Dorsolateral prefrontal cortex (tissue), 120 donors: ENCODE measurements at regions of chr1 and their contacts with region 1.

Region 1: GRCh38 chr1:33080885-33081553 is at the start of gene AZIN2:
- DNase-seq: peak; percentile 99 to 100 (median 99)
- H3K4me3 ChIP-seq: peak within 1 kb of the TSS; percentile 62 to 99 (median 91)
- H3K27ac ChIP-seq: peak within 1 kb of the TSS in 57 of 59 donors; percentile 12 to 99 (median 83)
- H3K27me3 ChIP-seq: no peaks in the 10 kb centered on the region
- CTCF ChIP-seq: peak in 19 of 56 donors; percentile 9 to 40 (median 22)
- total RNA-seq, gene AZIN2: 22.5 to 68.9 (median 42.9) TPM

Region 2: DNA sequence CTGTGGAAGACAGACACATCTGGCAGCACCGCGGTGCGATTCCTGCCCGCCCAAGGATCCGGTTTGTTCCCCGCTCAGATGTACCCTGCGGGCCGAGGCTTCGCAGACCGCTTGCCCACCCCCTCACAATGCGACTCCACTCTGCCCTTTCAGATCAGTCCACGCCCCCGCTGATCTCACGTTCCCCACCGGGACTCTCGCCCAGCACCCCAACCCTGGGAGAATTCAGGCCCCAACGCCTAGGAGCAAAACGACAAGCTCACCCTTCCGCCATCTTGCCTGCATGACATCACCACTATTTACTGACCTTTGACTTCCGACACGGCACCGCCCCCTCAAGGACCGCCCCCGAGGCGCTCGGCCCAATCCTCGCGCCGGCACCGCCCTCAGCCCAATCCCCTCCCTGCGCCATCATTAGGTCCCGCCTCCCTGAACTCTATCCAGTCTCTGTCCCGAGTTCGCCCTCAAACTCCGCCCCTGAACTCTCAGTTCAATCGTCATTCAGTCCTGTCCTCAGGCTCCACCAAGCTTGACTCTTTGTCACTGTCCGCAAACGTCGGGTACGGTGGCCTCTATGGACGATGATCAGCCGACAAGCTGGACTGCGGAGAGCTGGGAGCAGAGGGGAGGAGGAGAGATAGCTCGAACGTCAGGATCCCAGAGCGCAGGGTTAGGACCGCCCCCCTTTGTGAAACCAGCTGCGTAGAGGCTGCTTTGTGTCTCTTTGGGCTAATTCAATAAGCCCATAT is 686.7 kb before region 1 on chr1 and contains the start of gene BSDC1:
- intact Hi-C with region 1: loop called in 1 of 2 experiments (anchors 10 kb)
- DNase-seq: peak; percentile 95 to 99 (median 99)
- H3K4me3 ChIP-seq: peak within 1 kb of the TSS; percentile 63 to 100 (median 95)
- H3K27ac ChIP-seq: peak within 1 kb of the TSS; percentile 63 to 96 (median 91)
- H3K27me3 ChIP-seq: no peaks in the 10 kb centered on the region
- CTCF ChIP-seq: peak in 26 of 56 donors; percentile 4 to 61 (median 23)
- total RNA-seq, gene BSDC1: 87.5 to 123 (median 103) TPM

Region 3: GRCh38 chr1:32817159-32817814 is 263.7 kb before region 1 on chr1 and contains the starts of genes S100PBP and YARS1:
- intact Hi-C with region 1: loop called in 1 of 2 experiments (anchors 5 kb)
- DNase-seq: peak; percentile 98 to 100 (median 100)
- H3K4me3 ChIP-seq: peak within 1 kb of the TSS; percentile 66 to 100 (median 97)
- H3K27ac ChIP-seq: peak within 1 kb of the TSS; percentile 52 to 97 (median 91)
- H3K27me3 ChIP-seq: no peaks in the 10 kb centered on the region
- CTCF ChIP-seq: peak in 37 of 56 donors; percentile 14 to 58 (median 36)
- total RNA-seq, gene S100PBP: 26.9 to 75.5 (median 43.2) TPM
- total RNA-seq, gene YARS1: 66.2 to 170 (median 126) TPM

Region 4: GRCh38 chr1:32964461-32965250 is 116.4 kb before region 1 on chr1 and contains the start of gene RNF19B:
- intact Hi-C with region 1: loop called (anchors 10 kb)
- DNase-seq: peak; percentile 91 to 97 (median 94)
- H3K4me3 ChIP-seq: peak within 1 kb of the TSS; percentile 61 to 98 (median 88)
- H3K27ac ChIP-seq: peak within 1 kb of the TSS; percentile 40 to 96 (median 85)
- H3K27me3 ChIP-seq: no peaks in the 10 kb centered on the region
- CTCF ChIP-seq: peak in 51 of 56 donors; percentile 16 to 71 (median 50)
- total RNA-seq, gene RNF19B: 19.7 to 42.6 (median 28.7) TPM

Region 5: GRCh38 chr1:33036526-33037503 is 44.2 kb before region 1 on chr1 and contains the start of gene AK2:
- intact Hi-C with region 1: loop called in 1 of 2 experiments (anchors 10 kb)
- DNase-seq: peak; percentile 92 to 98 (median 98)
- H3K4me3 ChIP-seq: peak within 1 kb of the TSS; percentile 68 to 100 (median 96)
- H3K27ac ChIP-seq: peak within 1 kb of the TSS in 47 of 59 donors; percentile 5 to 90 (median 67)
- H3K27me3 ChIP-seq: no peaks in the 10 kb centered on the region
- CTCF ChIP-seq: peak in 11 of 56 donors; percentile 6 to 42 (median 17)
- total RNA-seq, gene AK2: 59.4 to 114 (median 81.1) TPM

Region 6: GRCh38 chr1:33045246-33045645 is 35.8 kb before region 1 on chr1:
- intact Hi-C with region 1: loop called in 1 of 2 experiments (anchors 5 kb)
- DNase-seq: no peak
- H3K4me3 ChIP-seq: no peak overlapping the region
- H3K27ac ChIP-seq: no peak overlapping the region
- H3K27me3 ChIP-seq: no peaks in the 10 kb centered on the region
- CTCF ChIP-seq: no peak